B cell (primary cell): ENCODE measurements at regions of chr4 and their contacts with region 1.

Region 1: DNA sequence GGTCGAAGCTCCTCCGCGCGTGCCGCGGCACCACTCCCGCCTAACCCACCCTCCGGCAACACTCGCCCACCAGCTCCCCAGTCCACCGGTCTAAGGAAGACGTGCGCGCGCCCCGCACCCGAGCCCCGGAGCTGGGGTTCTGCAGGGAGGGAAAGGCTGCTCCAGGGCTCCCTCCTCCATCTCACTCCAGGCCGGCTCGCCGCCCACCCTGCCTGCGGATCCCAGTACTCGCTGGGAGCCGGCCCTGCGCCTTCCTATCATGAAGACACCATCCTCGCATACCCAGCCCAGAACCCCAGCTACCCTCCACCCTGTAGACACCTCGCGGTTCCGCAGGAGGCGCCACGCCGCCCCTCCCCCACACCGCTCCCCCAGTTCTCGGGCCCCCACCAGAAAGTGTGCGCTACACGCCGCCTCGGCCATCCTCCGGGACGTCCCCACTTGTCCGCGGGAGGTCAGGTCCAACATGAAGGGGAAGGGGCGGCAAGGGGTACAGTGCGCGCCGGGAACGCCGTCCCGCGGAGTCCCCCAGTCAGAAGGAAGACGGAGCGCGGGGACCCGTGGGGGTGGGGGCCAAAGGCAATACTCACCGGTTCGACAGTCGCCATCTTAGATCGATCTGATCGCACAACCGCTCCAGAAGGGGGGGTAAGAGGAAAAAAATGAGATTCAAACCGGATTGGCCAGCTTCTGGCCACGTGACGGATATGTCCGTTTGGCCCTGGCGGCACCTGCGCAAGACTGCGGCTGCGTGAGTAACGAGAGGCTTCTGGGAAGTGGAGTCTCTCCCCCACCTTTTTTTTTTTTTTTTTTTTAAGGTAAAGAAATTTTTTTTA is at the start of gene EIF4E:
- DNase-seq: peak; percentile 99
- ATAC-seq: peak; percentile 77
- H3K4me3 ChIP-seq: peak within 1 kb of the TSS; percentile 95 to 100 (median 98)
- H3K4me3 Mint-ChIP-seq: peak within 1 kb of the TSS; percentile 99
- H3K27ac ChIP-seq: peak within 1 kb of the TSS; percentile 91 to 93
- H3K27ac Mint-ChIP-seq: peak within 1 kb of the TSS; percentile 99
- H3K4me1 ChIP-seq: peaks cover 31 to 32% of the 10 kb centered on the region in 2 donors
- H3K4me1 Mint-ChIP-seq: peaks cover 50% of the 10 kb centered on the region
- H3K27me3 ChIP-seq: no peaks in the 10 kb centered on the region
- H3K27me3 Mint-ChIP-seq: no peaks in the 10 kb centered on the region
- CTCF ChIP-seq: peak; percentile 67
- total RNA-seq, gene EIF4E: 71.1 and 71.2 TPM in 2 replicates

Region 2: DNA sequence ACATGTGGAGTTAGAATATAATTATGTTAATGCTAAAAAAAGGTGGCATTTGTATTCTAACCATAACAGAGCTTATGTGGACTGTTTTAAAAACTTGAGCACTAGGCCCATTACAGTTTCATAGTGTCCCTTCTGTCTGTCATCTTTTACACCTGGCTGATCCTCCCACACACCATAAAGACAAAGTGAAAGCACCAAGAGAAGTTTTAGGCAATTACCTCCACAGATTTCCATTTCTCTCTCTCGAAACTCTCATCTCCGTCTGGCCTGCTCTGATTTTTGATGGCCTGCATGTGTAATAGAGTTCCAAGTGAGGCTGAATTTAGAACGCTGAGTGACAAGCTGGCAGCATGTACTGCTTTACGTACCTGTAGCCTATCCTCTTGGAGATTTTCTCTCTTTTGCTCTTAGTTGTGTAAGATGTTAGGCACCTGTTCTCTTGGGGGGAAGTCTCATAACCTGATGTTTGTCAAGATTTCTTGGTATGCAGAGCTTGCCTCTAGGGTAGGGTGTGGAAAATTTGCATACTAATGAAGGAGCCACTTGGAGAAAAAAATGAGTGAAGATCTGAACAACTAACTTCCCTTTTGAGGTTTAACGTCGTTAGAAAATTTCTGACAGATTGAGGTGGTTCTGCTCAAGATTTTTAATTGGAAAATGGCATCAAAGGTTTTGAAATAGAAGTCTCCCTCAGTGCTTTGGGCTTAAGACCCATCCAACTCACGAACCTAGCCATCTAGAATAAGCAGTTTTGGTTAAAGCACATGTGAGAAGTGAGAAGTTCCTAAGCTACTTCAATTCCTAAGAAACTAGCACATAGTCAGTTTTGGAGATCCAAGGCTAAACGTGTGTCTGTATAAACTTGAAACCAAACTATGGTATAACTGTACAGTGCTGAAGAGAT is 725.1 kb before region 1 on chr4:
- CTCF ChIA-PET with region 1: no interaction called
- POLR2A ChIA-PET with region 1: interaction called, 4 read pairs
- intact Hi-C with region 1: loop called (anchors 2 kb)
- DNase-seq: peak; percentile 75
- ATAC-seq: peak; percentile 89
- H3K4me3 ChIP-seq: peak overlapping the region; percentile 32 to 64 (median 53)
- H3K4me3 Mint-ChIP-seq: peak overlapping the region; percentile 89
- H3K27ac ChIP-seq: peak overlapping the region; percentile 74 to 86
- H3K27ac Mint-ChIP-seq: peak overlapping the region; percentile 97
- H3K4me1 ChIP-seq: peaks cover 27% of the 10 kb centered on the region in 2 donors
- H3K4me1 Mint-ChIP-seq: peaks cover 35% of the 10 kb centered on the region
- H3K27me3 ChIP-seq: no peaks in the 10 kb centered on the region
- H3K27me3 Mint-ChIP-seq: no peaks in the 10 kb centered on the region
- CTCF ChIP-seq: no peak

Region 3: GRCh38 chr4:98341309-98341708 is 587.4 kb before region 1 on chr4:
- CTCF ChIA-PET with region 1: no interaction called
- POLR2A ChIA-PET with region 1: no interaction called
- intact Hi-C with region 1: no loop called
- DNase-seq: no peak
- ATAC-seq: no peak
- H3K4me3 ChIP-seq: no peak overlapping the region
- H3K4me3 Mint-ChIP-seq: no peak overlapping the region
- H3K27ac ChIP-seq: no peak overlapping the region
- H3K27ac Mint-ChIP-seq: peak overlapping the region; percentile 62
- H3K4me1 ChIP-seq: peaks cover 4 to 6% of the 10 kb centered on the region in 2 donors
- H3K4me1 Mint-ChIP-seq: peaks cover 17% of the 10 kb centered on the region
- H3K27me3 ChIP-seq: no peaks in the 10 kb centered on the region
- H3K27me3 Mint-ChIP-seq: no peaks in the 10 kb centered on the region
- CTCF ChIP-seq: no peak

Region 4: DNA sequence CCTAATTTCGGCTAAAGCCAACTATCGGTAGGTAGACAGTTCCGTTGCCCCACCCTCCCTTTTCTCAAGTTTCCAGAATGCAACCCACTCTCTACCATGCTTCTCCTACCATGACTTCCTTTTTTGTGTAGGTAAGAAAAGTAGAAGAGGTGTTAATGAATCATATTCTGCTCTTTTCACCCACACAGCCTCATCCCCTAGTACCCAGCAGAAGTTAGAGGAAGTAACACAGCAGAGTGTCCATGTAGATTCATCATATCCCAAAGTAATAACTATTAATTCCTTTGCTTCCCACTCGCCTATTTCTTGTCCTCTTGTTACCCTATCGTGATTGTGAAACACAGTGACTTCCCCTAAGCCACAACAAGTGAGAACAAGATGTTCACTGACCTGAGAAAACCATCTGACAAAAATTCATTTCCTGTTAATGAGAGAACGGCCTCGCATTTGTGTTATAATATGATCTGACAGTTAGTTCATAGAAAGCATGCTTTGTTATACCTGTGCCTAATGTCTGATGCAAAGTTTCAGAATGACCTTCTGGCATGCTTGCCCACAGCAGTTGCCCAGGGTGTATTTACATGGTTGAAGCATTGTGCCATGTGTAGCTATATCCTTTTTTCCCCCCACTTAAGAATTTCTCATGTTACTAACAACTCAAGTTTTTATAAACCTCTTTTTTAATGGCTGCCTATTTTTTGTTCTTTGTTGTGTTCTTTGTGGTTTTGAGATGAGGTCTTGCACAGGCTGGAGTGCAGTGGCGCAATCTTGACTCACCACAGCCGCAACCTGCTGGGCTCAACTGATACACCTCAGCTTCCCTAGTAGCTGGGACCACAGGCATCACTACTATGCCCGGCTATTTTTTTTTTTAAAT is 482.0 kb before region 1 on chr4:
- CTCF ChIA-PET with region 1: interaction called, 3 read pairs
- POLR2A ChIA-PET with region 1: no interaction called
- intact Hi-C with region 1: loop called (anchors 1 kb)
- DNase-seq: peak; percentile 75
- ATAC-seq: peak; percentile 72
- H3K4me3 ChIP-seq: peak overlapping the region in 4 of 5 experiments; percentile 32 to 53 (median 48)
- H3K4me3 Mint-ChIP-seq: peak overlapping the region; percentile 75
- H3K27ac ChIP-seq: peak overlapping the region; percentile 69 to 70
- H3K27ac Mint-ChIP-seq: peak overlapping the region; percentile 93
- H3K4me1 ChIP-seq: peaks cover 35 to 42% of the 10 kb centered on the region in 2 donors
- H3K4me1 Mint-ChIP-seq: peaks cover 45% of the 10 kb centered on the region
- H3K27me3 ChIP-seq: no peaks in the 10 kb centered on the region
- H3K27me3 Mint-ChIP-seq: no peaks in the 10 kb centered on the region
- CTCF ChIP-seq: no peak

Region 5: DNA sequence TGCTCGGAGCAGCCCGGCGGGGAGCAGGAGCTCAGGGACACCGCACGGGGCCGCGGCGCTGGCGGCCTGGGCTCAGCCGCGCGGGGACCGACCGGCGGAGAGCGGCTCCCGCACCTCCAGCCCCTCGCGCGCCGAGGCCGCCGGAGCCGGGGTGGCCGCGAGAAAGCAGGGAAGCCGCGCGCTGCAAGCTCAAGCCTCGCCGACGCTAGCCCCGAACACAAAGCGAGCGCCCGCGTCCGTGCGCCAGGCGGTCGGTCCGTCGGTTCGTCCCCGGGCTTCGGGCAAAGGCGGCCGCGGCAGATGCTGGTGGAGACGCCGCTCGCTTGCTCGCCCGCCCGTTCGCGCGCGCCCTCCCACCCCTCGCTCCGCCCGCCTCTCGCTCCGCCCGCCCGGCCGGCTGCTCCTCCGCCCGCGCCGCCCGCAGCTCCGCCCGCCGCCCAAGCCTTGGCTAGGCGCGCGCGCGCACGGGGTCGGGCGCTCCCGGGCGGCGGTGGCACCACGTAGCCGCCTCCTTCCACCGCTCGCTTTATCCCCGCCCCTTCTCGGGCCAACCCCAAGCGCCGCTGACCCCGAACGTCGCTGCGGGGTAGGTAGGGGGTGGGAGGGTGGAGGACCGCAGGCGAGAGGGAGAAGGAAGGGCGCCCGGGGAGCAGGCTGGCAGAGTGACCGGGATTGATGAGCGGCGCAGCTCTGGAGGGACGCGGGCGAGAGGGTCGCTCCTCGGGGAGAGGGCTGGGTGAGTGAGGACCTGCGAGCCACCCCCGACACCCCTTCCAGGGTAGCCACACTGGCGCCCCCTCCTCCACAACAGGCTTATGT is 270.2 kb before region 1 on chr4 and contains the start of gene TSPAN5:
- CTCF ChIA-PET with region 1: interaction called, 5 read pairs
- POLR2A ChIA-PET with region 1: interaction called, 4 read pairs
- intact Hi-C with region 1: loop called (anchors 1 kb)
- DNase-seq: peak; percentile 89
- ATAC-seq: peak; percentile 84
- H3K4me3 ChIP-seq: peak within 1 kb of the TSS; percentile 34 to 92 (median 81)
- H3K4me3 Mint-ChIP-seq: peak within 1 kb of the TSS; percentile 89
- H3K27ac ChIP-seq: peak within 1 kb of the TSS; percentile 37 to 74
- H3K27ac Mint-ChIP-seq: peak within 1 kb of the TSS; percentile 75
- H3K4me1 ChIP-seq: peaks cover 27 to 33% of the 10 kb centered on the region in 2 donors
- H3K4me1 Mint-ChIP-seq: peaks cover 52% of the 10 kb centered on the region
- H3K27me3 ChIP-seq: peaks cover 0 to 10% (median 1%) of the 10 kb centered on the region in 4 experiments
- H3K27me3 Mint-ChIP-seq: peaks cover 8% of the 10 kb centered on the region
- CTCF ChIP-seq: no peak
- total RNA-seq, gene TSPAN5: 5.3 TPM in 2 replicates

Region 6: DNA sequence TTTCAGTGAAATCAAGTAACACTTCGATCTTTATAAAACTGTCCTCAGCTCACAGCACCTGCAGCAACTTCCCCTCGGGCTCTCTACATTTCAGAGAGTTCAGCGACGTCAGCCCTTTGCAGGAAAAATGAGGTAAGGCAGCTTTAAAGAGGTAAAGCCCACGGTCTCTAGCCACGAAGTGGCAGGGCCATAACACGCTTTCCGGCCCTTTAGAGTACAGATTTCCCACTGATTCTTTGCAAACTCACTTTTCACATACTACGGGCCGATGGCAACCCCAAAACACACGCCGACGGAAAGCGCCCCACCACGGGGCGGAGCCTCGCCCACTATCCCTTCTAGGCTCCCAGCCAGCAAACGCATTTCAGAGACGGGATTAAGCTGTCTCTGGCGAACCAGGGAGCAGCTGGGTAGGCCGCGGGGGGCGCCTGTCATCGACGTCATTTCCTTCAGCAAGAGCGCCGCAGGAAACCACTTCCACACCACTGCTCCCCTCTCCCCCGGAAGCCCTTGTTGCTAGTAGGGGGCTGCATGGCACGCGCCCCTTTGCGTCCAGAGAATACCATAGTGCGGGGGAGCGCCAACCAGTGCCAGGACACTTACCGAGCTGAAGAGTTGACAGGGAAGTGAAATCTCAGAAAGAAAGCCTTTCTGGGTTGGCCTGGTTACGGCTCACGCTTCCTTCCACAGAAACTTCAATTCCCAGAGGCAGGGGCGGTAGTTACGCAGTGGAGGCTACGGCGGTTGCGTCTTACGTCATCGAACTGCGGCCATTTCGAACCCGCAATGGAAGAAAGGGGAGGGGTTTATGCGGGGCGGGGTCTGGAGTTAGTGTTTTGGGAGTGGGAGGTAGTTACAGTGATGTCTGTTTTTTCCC is 634.8 kb after region 1 on chr4 and contains the start of gene TRMT10A:
- CTCF ChIA-PET with region 1: no interaction called
- POLR2A ChIA-PET with region 1: no interaction called
- intact Hi-C with region 1: loop called (anchors 2 kb)
- DNase-seq: peak; percentile 98
- ATAC-seq: peak; percentile 84
- H3K4me3 ChIP-seq: peak within 1 kb of the TSS; percentile 73 to 92 (median 80)
- H3K4me3 Mint-ChIP-seq: peak within 1 kb of the TSS; percentile 99
- H3K27ac ChIP-seq: peak within 1 kb of the TSS; percentile 96
- H3K27ac Mint-ChIP-seq: peak within 1 kb of the TSS; percentile 100
- H3K4me1 ChIP-seq: peaks cover 4 to 9% of the 10 kb centered on the region in 2 donors
- H3K4me1 Mint-ChIP-seq: peaks cover 18% of the 10 kb centered on the region
- H3K27me3 ChIP-seq: peaks cover 0 to 9% (median 2%) of the 10 kb centered on the region in 4 experiments
- H3K27me3 Mint-ChIP-seq: peaks cover 24% of the 10 kb centered on the region
- CTCF ChIP-seq: no peak
- total RNA-seq, gene TRMT10A: 4.5 and 5.5 TPM in 2 replicates